Endothelial cell of umbilical vein (primary cell): ENCODE measurements at regions of chr11 and their contacts with region 1.

Region 1: GRCh38 chr11:79087238-79087960 is 353.4 kb downstream of the TENM4 start:
- DNase-seq: peak; percentile 76
- H3K4me3 ChIP-seq: no peak overlapping the region
- H3K27ac ChIP-seq: peak overlapping the region; percentile 30
- H3K4me1 ChIP-seq: peaks cover 20% of the 10 kb centered on the region
- H3K27me3 ChIP-seq: no peaks in the 10 kb centered on the region
- CTCF ChIP-seq: no peak
- POLR2A ChIP-seq: no peak

Region 2: DNA sequence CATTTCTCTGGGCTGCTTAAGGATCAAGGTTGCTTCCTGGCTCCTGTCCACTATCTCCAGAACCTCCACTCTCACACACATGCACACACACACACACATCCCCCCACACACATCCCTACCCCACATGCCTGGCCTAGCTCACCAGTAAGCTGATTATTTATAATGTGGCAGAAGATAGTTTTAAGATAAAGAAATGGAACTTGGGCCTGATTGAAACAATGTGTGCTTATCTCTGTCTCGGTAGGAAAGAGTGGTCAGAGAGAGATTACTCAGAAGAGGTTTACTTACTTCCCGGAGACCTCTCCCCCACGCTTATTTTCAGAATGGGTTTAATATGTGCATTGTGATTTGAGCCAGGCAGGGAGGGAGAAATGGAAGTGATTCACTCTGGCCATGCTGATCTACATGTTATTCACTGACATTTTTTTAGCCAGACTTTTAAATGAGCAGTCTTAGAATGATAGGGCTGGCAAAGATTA is 69.0 kb before region 1 on chr11:
- CTCF ChIA-PET with region 1: interaction called, 4 read pairs
- POLR2A ChIA-PET with region 1: no interaction called
- dilution Hi-C with region 1: no loop called
- intact Hi-C with region 1: loop called (anchors 1 kb)
- DNase-seq: peak; percentile 97
- H3K4me3 ChIP-seq: no peak overlapping the region
- H3K27ac ChIP-seq: peak overlapping the region; percentile 58
- H3K4me1 ChIP-seq: peaks cover 21% of the 10 kb centered on the region
- H3K27me3 ChIP-seq: no peaks in the 10 kb centered on the region
- CTCF ChIP-seq: no peak
- POLR2A ChIP-seq: peak; percentile 45

Region 3: GRCh38 chr11:79119491-79120284 is 32.3 kb after region 1 on chr11:
- CTCF ChIA-PET with region 1: no interaction called
- POLR2A ChIA-PET with region 1: no interaction called
- dilution Hi-C with region 1: no loop called
- intact Hi-C with region 1: no loop called
- DNase-seq: no peak
- H3K4me3 ChIP-seq: no peak overlapping the region
- H3K27ac ChIP-seq: no peak overlapping the region
- H3K4me1 ChIP-seq: no peaks in the 10 kb centered on the region
- H3K27me3 ChIP-seq: no peaks in the 10 kb centered on the region
- CTCF ChIP-seq: no peak
- POLR2A ChIP-seq: no peak

Region 4: GRCh38 chr11:79236541-79236971 is 149.2 kb after region 1 on chr11:
- CTCF ChIA-PET with region 1: no interaction called
- POLR2A ChIA-PET with region 1: no interaction called
- dilution Hi-C with region 1: no loop called
- intact Hi-C with region 1: no loop called
- DNase-seq: no peak
- H3K4me3 ChIP-seq: no peak overlapping the region
- H3K27ac ChIP-seq: no peak overlapping the region
- H3K4me1 ChIP-seq: no peaks in the 10 kb centered on the region
- H3K27me3 ChIP-seq: no peaks in the 10 kb centered on the region
- CTCF ChIP-seq: no peak
- POLR2A ChIP-seq: no peak